ENCODE measurements at regions of chr11 and their contacts with region 1.

Region 1: GRCh38 chr11:66677599-66678375 is at the start of gene RBM4B:
- DNase-seq: peak; percentile 99
- ATAC-seq: peak; percentile 91
- H3K4me3 ChIP-seq: peak within 1 kb of the TSS; percentile 86 to 95 (median 89)
- H3K4me3 Mint-ChIP-seq: peak within 1 kb of the TSS; percentile 99
- H3K27ac ChIP-seq: peak within 1 kb of the TSS; percentile 91 to 99
- H3K27ac Mint-ChIP-seq: peak within 1 kb of the TSS; percentile 99
- H3K4me1 ChIP-seq: peaks cover 24 to 35% of the 10 kb centered on the region in 2 donors
- H3K4me1 Mint-ChIP-seq: peaks cover 33% of the 10 kb centered on the region
- H3K27me3 ChIP-seq: no peaks in the 10 kb centered on the region
- H3K27me3 Mint-ChIP-seq: no peaks in the 10 kb centered on the region
- CTCF ChIP-seq: no peak
- total RNA-seq, gene RBM4B: 61.3 and 66.4 TPM in 2 replicates

Region 2: DNA sequence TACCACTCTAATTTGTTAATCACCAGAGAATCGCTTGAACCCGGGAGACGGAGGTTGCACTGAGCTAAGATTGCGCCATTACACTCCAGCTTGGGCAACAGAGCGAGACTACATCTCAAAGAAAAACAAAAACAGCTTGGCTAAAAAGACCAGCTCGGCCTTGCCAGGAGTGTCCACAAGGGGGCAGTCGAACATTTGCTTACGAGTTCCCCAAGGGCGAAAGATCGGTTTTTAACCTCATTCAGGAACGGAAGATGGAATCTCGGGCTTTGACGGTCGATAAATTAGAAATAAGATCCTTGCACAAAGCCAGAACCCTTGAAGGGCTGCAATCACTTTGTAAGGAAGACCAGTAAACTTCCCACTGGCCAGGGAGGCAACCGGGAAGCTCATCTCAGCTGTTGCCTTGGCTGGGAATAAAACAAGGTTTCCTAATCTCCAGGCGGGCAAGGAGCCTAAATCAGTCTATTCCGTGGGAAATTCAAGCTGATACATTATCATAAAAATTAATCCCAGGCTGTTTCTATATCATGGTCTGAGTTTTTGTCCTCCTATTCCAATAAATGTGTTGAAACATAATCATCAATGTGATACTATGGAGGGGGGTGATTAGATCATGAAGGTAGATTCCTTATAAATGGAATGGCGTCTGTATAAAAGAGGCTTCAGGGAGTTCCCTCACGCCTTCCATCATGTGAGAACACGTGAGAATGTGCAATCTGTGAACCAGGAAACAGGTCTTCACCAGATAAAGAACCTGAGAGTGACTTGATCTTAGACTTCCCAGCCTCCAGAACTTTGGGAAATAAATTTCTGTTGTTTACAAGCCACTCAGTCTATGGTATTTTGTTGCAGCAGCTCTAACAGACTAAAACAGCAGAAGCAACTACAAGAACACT is 291.4 kb before region 1 on chr11:
- CTCF ChIA-PET with region 1: interaction called, 12 read pairs
- POLR2A ChIA-PET with region 1: interaction called, 3 read pairs
- intact Hi-C with region 1: no loop called
- DNase-seq: peak; percentile 88
- ATAC-seq: peak; percentile 85
- H3K4me3 ChIP-seq: peak overlapping the region in 2 of 5 experiments; percentile 11 to 34
- H3K4me3 Mint-ChIP-seq: peak overlapping the region; percentile 21
- H3K27ac ChIP-seq: no peak overlapping the region
- H3K27ac Mint-ChIP-seq: no peak overlapping the region
- H3K4me1 ChIP-seq: peaks cover 7 to 12% of the 10 kb centered on the region in 2 donors
- H3K4me1 Mint-ChIP-seq: peaks cover 10% of the 10 kb centered on the region
- H3K27me3 ChIP-seq: no peaks in the 10 kb centered on the region
- H3K27me3 Mint-ChIP-seq: no peaks in the 10 kb centered on the region
- CTCF ChIP-seq: peak; percentile 94

Region 3: GRCh38 chr11:66466225-66467027 is 211.4 kb before region 1 on chr11 and contains the start of gene PELI3:
- CTCF ChIA-PET with region 1: interaction called, 4 read pairs
- POLR2A ChIA-PET with region 1: interaction called, 7 read pairs
- intact Hi-C with region 1: loop called (anchors 5 kb)
- DNase-seq: peak; percentile 97
- ATAC-seq: peak; percentile 92
- H3K4me3 ChIP-seq: peak within 1 kb of the TSS; percentile 19 to 82 (median 71)
- H3K4me3 Mint-ChIP-seq: peak within 1 kb of the TSS; percentile 95
- H3K27ac ChIP-seq: peak within 1 kb of the TSS; percentile 81 to 84
- H3K27ac Mint-ChIP-seq: peak within 1 kb of the TSS; percentile 89
- H3K4me1 ChIP-seq: peaks cover 35 to 40% of the 10 kb centered on the region in 2 donors
- H3K4me1 Mint-ChIP-seq: peaks cover 35% of the 10 kb centered on the region
- H3K27me3 ChIP-seq: no peaks in the 10 kb centered on the region
- H3K27me3 Mint-ChIP-seq: no peaks in the 10 kb centered on the region
- CTCF ChIP-seq: no peak
- total RNA-seq, gene PELI3: 15.6 and 17.0 TPM in 2 replicates

Region 4: GRCh38 chr11:66568124-66568916 is 109.5 kb before region 1 on chr11 and contains the start of gene CTSF:
- CTCF ChIA-PET with region 1: interaction called, 21 read pairs
- POLR2A ChIA-PET with region 1: interaction called, 3 read pairs
- intact Hi-C with region 1: no loop called
- DNase-seq: peak; percentile 74
- ATAC-seq: peak; percentile 96
- H3K4me3 ChIP-seq: peak within 1 kb of the TSS in 4 of 5 experiments; percentile 37 to 69 (median 58)
- H3K4me3 Mint-ChIP-seq: peak within 1 kb of the TSS; percentile 86
- H3K27ac ChIP-seq: no peak within 1 kb of the TSS
- H3K27ac Mint-ChIP-seq: peak within 1 kb of the TSS; percentile 65
- H3K4me1 ChIP-seq: peaks cover 9 to 11% of the 10 kb centered on the region in 2 donors
- H3K4me1 Mint-ChIP-seq: peaks cover 10% of the 10 kb centered on the region
- H3K27me3 ChIP-seq: peaks cover 0 to 22% (median 3%) of the 10 kb centered on the region in 4 experiments
- H3K27me3 Mint-ChIP-seq: peaks cover 9% of the 10 kb centered on the region
- CTCF ChIP-seq: no peak
- total RNA-seq, gene CTSF: 20.9 and 24.0 TPM in 2 replicates

Region 5: DNA sequence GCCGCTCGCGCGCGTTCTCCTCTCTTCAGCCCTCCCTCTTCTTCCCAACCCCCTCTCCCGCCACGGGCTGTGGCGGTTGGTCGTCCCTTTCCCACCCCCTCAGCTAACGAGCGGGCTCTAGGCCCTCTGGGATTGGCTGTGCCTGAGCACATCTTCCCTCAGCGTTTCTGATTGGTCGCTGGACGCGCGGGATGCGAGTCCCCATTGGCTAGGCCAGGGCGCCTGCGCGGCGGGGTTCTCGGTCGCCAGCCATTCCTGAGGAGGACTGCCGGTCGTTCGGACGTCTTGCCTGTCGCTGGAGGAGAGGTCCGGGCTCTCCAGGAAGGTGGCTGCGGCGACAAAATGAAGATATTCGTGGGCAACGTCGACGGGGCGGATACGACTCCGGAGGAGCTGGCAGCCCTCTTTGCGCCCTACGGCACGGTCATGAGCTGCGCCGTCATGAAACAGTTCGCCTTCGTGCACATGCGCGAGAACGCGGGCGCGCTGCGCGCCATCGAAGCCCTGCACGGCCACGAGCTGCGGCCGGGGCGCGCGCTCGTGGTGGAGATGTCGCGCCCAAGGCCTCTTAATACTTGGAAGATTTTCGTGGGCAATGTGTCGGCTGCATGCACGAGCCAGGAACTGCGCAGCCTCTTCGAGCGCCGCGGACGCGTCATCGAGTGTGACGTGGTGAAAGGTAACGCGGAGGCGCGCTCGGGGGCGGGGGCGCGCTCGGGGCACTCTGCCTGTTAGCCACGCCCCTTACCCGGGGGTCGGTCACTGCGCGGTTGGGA is 61.2 kb before region 1 on chr11 and contains the start of gene RBM14:
- CTCF ChIA-PET with region 1: interaction called, 32 read pairs
- POLR2A ChIA-PET with region 1: interaction called, 49 read pairs
- intact Hi-C with region 1: loop called (anchors 1 kb)
- DNase-seq: peak; percentile 99
- ATAC-seq: peak; percentile 89
- H3K4me3 ChIP-seq: peak within 1 kb of the TSS; percentile 75 to 97 (median 94)
- H3K4me3 Mint-ChIP-seq: peak within 1 kb of the TSS; percentile 99
- H3K27ac ChIP-seq: peak within 1 kb of the TSS; percentile 85 to 90
- H3K27ac Mint-ChIP-seq: peak within 1 kb of the TSS; percentile 99
- H3K4me1 ChIP-seq: peaks cover 53 to 65% of the 10 kb centered on the region in 2 donors
- H3K4me1 Mint-ChIP-seq: peaks cover 59% of the 10 kb centered on the region
- H3K27me3 ChIP-seq: no peaks in the 10 kb centered on the region
- H3K27me3 Mint-ChIP-seq: no peaks in the 10 kb centered on the region
- CTCF ChIP-seq: no peak
- total RNA-seq, gene RBM14: 244 and 246 TPM in 2 replicates

Region 6: GRCh38 chr11:66752148-66752547 is 74.4 kb after region 1 on chr11:
- CTCF ChIA-PET with region 1: no interaction called
- POLR2A ChIA-PET with region 1: no interaction called
- intact Hi-C with region 1: no loop called
- DNase-seq: no peak
- ATAC-seq: no peak
- H3K4me3 ChIP-seq: no peak overlapping the region
- H3K4me3 Mint-ChIP-seq: no peak overlapping the region
- H3K27ac ChIP-seq: no peak overlapping the region
- H3K27ac Mint-ChIP-seq: no peak overlapping the region
- H3K4me1 ChIP-seq: no peaks in the 10 kb centered on the region
- H3K4me1 Mint-ChIP-seq: peaks cover 17% of the 10 kb centered on the region
- H3K27me3 ChIP-seq: no peaks in the 10 kb centered on the region
- H3K27me3 Mint-ChIP-seq: no peaks in the 10 kb centered on the region
- CTCF ChIP-seq: no peak

Region 7: GRCh38 chr11:66835768-66836405 is 158.1 kb after region 1 on chr11:
- CTCF ChIA-PET with region 1: interaction called, 17 read pairs
- POLR2A ChIA-PET with region 1: no interaction called
- intact Hi-C with region 1: no loop called
- DNase-seq: no peak
- ATAC-seq: no peak
- H3K4me3 ChIP-seq: no peak overlapping the region
- H3K4me3 Mint-ChIP-seq: no peak overlapping the region
- H3K27ac ChIP-seq: no peak overlapping the region
- H3K27ac Mint-ChIP-seq: peak overlapping the region; percentile 15
- H3K4me1 ChIP-seq: peaks cover 6 to 18% of the 10 kb centered on the region in 2 donors
- H3K4me1 Mint-ChIP-seq: peaks cover 32% of the 10 kb centered on the region
- H3K27me3 ChIP-seq: no peaks in the 10 kb centered on the region
- H3K27me3 Mint-ChIP-seq: no peaks in the 10 kb centered on the region
- CTCF ChIP-seq: no peak